Heart right ventricle (tissue), 16 donors: ENCODE measurements at regions of chr6 and their contacts with region 1.

Region 1: DNA sequence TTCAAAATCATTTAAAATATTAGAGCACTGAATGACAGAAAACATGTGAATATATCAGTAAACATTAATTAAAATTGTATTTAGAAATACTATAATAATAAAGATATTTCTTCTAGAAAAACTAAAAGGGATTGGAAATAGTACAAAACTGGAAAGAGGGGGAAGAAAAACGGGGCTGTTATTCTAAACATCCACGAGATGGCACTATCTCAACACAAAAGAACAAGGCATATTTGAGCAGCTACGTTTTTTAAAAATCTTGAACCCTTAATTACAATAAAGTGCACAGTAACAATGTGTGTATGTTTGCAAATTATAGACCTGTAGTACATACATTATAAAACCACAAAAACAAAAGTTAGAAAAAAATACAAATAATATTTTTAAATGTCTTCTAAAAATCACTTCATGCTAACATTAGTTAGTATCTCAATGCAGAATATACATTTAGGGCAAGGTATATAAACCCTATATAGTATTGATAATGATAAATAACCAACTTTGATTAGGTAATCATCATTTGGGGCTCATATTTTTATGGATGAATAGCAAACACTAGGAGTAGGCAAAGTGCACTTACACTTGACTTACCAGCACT is 42.5 kb upstream of the PNISR start:
- DNase-seq: no peak
- ATAC-seq: no peak
- H3K4me3 ChIP-seq: no peak overlapping the region
- H3K27ac ChIP-seq: no peak overlapping the region
- H3K4me1 ChIP-seq: no peaks in the 10 kb centered on the region
- H3K27me3 ChIP-seq: no peaks in the 10 kb centered on the region
- CTCF ChIP-seq: peak in 8 of 9 donors; percentile 32 to 82 (median 72)

Region 2: DNA sequence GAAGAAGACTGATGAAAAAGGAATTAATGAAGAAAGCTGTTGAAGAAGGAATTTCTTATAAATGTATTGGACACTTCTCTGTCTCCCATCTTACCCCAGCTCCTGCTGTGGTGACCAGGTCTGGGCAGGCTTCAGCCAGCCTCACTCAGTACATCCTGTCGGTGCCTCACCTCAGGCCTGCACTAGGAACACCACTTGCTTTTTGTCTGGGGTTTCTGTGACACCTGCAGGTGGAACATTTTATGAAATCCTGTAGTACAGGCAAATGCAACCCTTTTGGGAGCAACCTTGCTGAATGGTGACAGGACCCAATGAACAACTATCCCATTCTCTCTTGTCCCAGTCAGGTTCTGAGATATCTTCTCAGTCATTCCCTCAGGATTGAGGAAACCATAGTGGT is 268.7 kb after region 1 on chr6:
- intact Hi-C with region 1: loop called in 4 of 10 experiments (anchors 5 to 10 kb)
- DNase-seq: no peak
- ATAC-seq: no peak
- H3K4me3 ChIP-seq: no peak overlapping the region
- H3K27ac ChIP-seq: no peak overlapping the region
- H3K4me1 ChIP-seq: no peaks in the 10 kb centered on the region
- H3K27me3 ChIP-seq: peaks cover 0 to 24% (median 15%) of the 10 kb centered on the region in 7 donors
- CTCF ChIP-seq: no peak

Region 3: GRCh38 chr6:99746261-99746895 is 278.8 kb after region 1 on chr6:
- intact Hi-C with region 1: loop called in 9 of 10 experiments (anchors 2 to 5 kb)
- DNase-seq: peak in 1 of 2 donors; percentile 41
- ATAC-seq: peak in 6 of 8 donors; percentile 59 to 75 (median 66)
- H3K4me3 ChIP-seq: no peak overlapping the region
- H3K27ac ChIP-seq: no peak overlapping the region
- H3K4me1 ChIP-seq: peaks cover 0 to 7% (median 0%) of the 10 kb centered on the region in 9 donors
- H3K27me3 ChIP-seq: peaks cover 0 to 34% (median 16%) of the 10 kb centered on the region in 7 donors
- CTCF ChIP-seq: peak; percentile 69 to 89 (median 81)

Region 4: DNA sequence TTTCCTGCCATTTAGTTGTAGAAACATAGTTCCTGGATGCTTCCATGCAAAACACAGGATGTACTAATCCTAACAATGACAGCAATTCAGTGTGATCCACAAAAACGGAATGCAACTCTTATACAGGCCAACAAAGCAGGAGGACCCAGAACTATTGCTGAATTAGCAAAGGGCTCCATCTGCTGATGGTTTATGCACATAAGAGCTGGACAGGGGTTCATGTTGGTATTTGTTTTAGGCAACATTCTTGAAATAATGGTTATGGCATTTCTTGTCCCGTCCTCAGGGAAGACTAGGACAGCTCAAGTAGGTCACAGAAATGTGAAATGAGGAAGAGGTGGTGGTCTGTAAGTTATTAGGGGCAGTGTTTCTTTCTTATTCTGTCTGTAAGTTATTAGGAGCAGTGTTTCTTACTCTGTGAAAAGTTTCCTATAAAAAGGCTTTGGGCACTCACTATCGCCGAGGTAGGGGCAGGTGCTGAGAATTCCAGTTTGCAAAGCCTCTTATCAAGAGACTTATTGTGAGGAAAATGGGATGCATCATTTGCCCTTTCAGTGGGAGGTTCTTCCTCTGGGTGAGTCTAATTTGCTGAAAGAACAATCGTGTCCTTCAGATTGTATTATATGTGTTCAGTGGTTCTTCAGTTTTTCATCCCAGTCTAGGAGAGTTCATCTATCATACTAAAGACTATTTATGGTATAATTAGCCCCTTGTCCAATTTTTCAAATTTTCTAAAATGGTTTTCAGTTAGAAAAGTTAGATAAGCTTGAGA is 355.3 kb after region 1 on chr6:
- intact Hi-C with region 1: loop called in 1 of 10 experiments (anchors 10 kb)
- DNase-seq: peak in 1 of 2 donors; percentile 7
- ATAC-seq: peak in 3 of 8 donors; percentile 47 to 61 (median 51)
- H3K4me3 ChIP-seq: no peak overlapping the region
- H3K27ac ChIP-seq: no peak overlapping the region
- H3K4me1 ChIP-seq: no peaks in the 10 kb centered on the region
- H3K27me3 ChIP-seq: peaks cover 0 to 34% (median 19%) of the 10 kb centered on the region in 7 donors
- CTCF ChIP-seq: peak in 7 of 9 donors; percentile 9 to 51 (median 35)

Region 5: DNA sequence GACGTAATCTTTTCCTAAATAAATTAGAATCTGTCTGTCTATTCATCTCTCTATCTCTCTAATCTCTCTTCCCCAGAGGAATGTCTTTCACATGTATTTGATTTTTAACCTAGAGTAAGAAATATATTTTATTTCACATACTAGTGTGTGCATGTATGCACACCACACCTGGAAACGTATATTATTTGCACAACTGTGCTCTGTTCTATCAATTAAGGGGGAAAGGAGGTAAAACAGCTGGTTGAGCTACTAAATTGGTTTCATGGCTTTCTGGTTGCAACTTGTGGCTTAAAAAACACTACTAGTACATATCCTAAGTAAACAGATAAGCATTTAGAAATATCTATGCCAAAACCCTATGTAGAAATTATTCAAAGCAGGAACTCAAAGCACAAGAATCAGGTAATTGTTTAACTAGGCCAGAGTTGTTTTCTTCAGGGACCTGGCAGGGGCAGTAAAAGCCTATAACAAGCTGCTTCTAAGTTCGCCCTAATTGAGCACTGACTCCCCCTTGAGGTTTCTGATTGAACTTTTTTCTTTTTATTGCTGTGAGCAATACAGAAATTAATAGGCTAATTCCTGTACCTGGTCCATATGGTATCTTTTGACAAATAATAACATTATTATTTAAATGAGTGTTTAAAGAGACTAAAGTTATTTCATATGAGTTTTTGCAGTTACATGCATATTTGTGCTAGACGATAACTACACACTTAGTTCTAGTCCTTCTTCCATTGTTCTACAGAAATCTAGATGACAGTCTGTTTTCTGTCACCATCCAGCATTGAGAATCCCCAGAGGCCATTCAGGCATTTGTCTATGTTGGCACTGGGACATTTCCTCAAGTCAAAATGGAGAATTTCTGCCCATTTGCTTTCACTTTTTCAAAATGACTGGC is 437.9 kb after region 1 on chr6:
- intact Hi-C with region 1: loop called in 1 of 10 experiments (anchors 10 kb)
- DNase-seq: no peak
- ATAC-seq: peak in 1 of 8 donors; percentile 41
- H3K4me3 ChIP-seq: no peak overlapping the region
- H3K27ac ChIP-seq: no peak overlapping the region
- H3K4me1 ChIP-seq: no peaks in the 10 kb centered on the region
- H3K27me3 ChIP-seq: peaks cover 0 to 11% (median 0%) of the 10 kb centered on the region in 7 donors
- CTCF ChIP-seq: peak in 8 of 9 donors; percentile 15 to 55 (median 46)